ENCODE measurements at regions of chr11 and their contacts with region 1.

Region 1: GRCh38 chr11:128157423-128158298 is 429.7 kb downstream of the ETS1 start:
- DNase-seq: peak; percentile 90
- H3K4me3 Mint-ChIP-seq: peak overlapping the region; percentile 63
- H3K27ac Mint-ChIP-seq: peak overlapping the region; percentile 78
- H3K4me1 Mint-ChIP-seq: peaks cover 10% of the 10 kb centered on the region
- H3K27me3 Mint-ChIP-seq: peaks cover 3% of the 10 kb centered on the region

Region 2: DNA sequence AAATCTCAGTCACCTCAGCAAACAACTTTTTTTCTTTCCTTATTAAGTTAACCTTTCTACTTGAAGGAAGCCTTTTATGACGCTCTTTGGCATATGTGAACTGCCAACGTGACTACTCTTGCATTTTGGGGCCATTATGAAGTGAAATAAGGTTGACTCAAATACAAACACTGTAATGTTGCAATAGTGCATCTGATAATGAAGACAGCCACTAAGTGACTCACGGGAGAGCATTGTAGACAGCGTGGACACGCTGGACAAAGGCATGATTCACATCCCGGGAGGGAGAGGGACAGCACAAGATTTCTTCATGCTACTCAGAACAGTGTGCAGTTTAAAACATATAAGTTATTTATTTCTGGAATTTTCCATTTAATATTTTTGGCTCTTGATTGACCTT is 131.1 kb before region 1 on chr11:
- intact Hi-C with region 1: loop called (anchors 1 kb)
- DNase-seq: no peak
- H3K4me3 Mint-ChIP-seq: no peak overlapping the region
- H3K27ac Mint-ChIP-seq: no peak overlapping the region
- H3K4me1 Mint-ChIP-seq: peaks cover 9% of the 10 kb centered on the region
- H3K27me3 Mint-ChIP-seq: peaks cover 37% of the 10 kb centered on the region

Region 3: DNA sequence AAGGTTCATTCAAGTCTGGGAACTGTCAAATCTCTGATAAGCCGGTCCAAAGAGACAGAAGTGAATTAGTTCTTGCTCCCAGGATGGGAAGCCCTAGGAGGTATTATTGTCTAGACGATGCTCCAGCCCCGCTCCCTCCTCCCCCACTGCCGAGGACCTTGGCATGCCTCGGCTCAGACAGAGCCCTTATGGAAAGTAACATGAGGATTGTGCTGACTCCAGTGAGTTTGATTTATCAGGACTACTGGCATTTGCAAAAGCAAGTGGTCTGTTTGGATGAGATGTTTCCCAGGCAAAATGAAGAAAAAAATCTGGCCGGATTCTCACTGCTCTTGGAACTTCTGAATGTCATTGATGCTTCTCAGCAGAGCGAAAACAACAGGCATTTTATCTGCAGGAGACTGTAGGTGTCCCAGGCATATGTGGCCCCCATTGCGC is 88.7 kb after region 1 on chr11:
- intact Hi-C with region 1: no loop called
- DNase-seq: no peak
- H3K4me3 Mint-ChIP-seq: no peak overlapping the region
- H3K27ac Mint-ChIP-seq: no peak overlapping the region
- H3K4me1 Mint-ChIP-seq: no peaks in the 10 kb centered on the region
- H3K27me3 Mint-ChIP-seq: peaks cover 10% of the 10 kb centered on the region

Region 4: GRCh38 chr11:128859563-128860441 is 702.1 kb after region 1 on chr11:
- intact Hi-C with region 1: loop called (anchors 5 kb)
- DNase-seq: peak; percentile 94
- H3K4me3 Mint-ChIP-seq: no peak overlapping the region
- H3K27ac Mint-ChIP-seq: no peak overlapping the region
- H3K4me1 Mint-ChIP-seq: peaks cover 3% of the 10 kb centered on the region
- H3K27me3 Mint-ChIP-seq: peaks cover 9% of the 10 kb centered on the region

Measured in activated CD4-positive, alpha-beta T cell treated with anti-CD3 and anti-CD28 coated beads, Interleukin-2, amount 10 ng/mL, durations not matched to agents 24 days and 14 days (primary cell).